ENCODE measurements at regions of chr9 and their contacts with region 1.

Region 1: DNA sequence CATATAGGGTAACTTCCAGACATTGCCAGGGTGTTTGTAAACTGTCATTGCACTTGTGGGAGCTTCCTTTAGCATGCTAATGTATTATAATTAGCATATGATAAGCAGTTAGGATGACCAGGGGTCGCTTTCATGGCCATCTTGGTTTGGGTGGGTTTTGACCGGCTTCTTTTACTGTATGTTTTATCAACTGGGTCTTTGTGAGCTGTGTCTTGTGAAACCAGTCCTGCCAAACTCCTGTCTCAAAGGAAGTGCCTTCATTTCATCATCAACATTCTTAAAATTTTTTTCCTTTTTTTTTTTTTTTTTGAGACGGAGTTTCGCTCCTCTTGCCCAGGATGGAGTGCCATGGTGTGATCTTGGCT is 11.9 kb upstream of the MELK start:
- DNase-seq: no peak
- ATAC-seq: no peak
- H3K4me3 ChIP-seq: no peak overlapping the region
- H3K4me3 Mint-ChIP-seq: no peak overlapping the region
- H3K27ac ChIP-seq: no peak overlapping the region
- H3K27ac Mint-ChIP-seq: no peak overlapping the region
- H3K4me1 ChIP-seq: no peaks in the 10 kb centered on the region
- H3K4me1 Mint-ChIP-seq: no peaks in the 10 kb centered on the region
- H3K27me3 ChIP-seq: no peaks in the 10 kb centered on the region
- H3K27me3 Mint-ChIP-seq: no peaks in the 10 kb centered on the region
- CTCF ChIP-seq: no peak

Region 2: DNA sequence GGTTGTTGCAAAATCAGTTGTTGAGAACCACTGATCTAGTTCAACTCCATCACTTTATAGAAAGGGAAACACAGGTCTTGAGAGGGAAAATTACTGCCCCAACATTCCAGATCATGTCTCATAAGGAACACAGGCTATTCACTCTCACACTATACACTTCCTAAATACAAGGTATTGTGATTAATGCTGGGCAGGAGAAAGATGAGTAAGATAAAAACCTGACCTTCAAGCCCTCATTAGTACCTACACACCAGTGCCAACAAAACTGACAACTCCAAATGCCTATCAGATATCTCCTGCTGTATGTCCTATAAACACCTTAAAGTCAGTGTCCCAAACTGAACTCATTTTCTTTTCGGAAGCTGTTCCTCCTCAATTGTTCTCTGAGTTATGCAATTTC is 310.8 kb before region 1 on chr9:
- CTCF ChIA-PET with region 1: no interaction called
- POLR2A ChIA-PET with region 1: no interaction called
- intact Hi-C with region 1: loop called (anchors 2 kb)
- DNase-seq: no peak
- ATAC-seq: no peak
- H3K4me3 ChIP-seq: no peak overlapping the region
- H3K4me3 Mint-ChIP-seq: no peak overlapping the region
- H3K27ac ChIP-seq: no peak overlapping the region
- H3K27ac Mint-ChIP-seq: no peak overlapping the region
- H3K4me1 ChIP-seq: peaks cover 6 to 9% of the 10 kb centered on the region in 2 donors
- H3K4me1 Mint-ChIP-seq: peaks cover 25% of the 10 kb centered on the region
- H3K27me3 ChIP-seq: no peaks in the 10 kb centered on the region
- H3K27me3 Mint-ChIP-seq: no peaks in the 10 kb centered on the region
- CTCF ChIP-seq: no peak

Region 3: GRCh38 chr9:36400332-36401163 is 160.3 kb before region 1 on chr9:
- CTCF ChIA-PET with region 1: interaction called, 456 read pairs
- POLR2A ChIA-PET with region 1: no interaction called
- intact Hi-C with region 1: no loop called
- DNase-seq: peak; percentile 97
- ATAC-seq: peak; percentile 79
- H3K4me3 ChIP-seq: peak overlapping the region; percentile 72 to 90 (median 81)
- H3K4me3 Mint-ChIP-seq: peak overlapping the region; percentile 88
- H3K27ac ChIP-seq: peak overlapping the region; percentile 94 to 98
- H3K27ac Mint-ChIP-seq: peak overlapping the region; percentile 93
- H3K4me1 ChIP-seq: peaks cover 18 to 21% of the 10 kb centered on the region in 2 donors
- H3K4me1 Mint-ChIP-seq: peaks cover 34% of the 10 kb centered on the region
- H3K27me3 ChIP-seq: no peaks in the 10 kb centered on the region
- H3K27me3 Mint-ChIP-seq: no peaks in the 10 kb centered on the region
- CTCF ChIP-seq: no peak

Region 4: DNA sequence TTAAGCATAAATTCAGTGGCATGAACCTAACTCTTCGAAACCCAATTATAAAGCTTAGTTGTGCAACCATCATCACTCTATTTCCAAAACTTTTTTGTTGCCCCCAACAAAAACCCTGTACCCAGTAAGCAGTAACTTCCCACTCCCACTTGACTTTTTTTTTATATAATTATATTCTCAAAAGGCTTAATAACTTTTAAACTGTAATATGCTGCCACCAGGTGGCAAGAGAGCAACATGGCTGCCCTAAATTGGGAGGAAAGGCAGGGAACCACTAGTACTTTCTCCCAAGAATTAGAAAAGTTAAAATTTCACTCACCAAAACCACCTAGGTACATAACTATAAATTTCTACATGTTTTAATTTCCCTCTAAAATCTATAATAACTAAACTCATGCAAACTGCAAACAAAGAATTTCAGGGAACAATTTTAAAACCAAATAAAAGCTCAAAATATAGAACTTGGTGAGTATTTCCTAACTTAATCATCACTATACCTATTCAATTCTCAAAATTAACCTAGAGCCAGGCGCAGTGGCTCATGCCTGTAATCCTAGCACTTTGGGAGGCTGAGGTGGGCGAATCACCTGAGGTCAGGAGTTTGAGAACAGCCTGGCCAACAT is 110.6 kb before region 1 on chr9:
- CTCF ChIA-PET with region 1: interaction called, 19 read pairs
- POLR2A ChIA-PET with region 1: no interaction called
- intact Hi-C with region 1: loop called (anchors 1 kb)
- DNase-seq: peak; percentile 40
- ATAC-seq: no peak
- H3K4me3 ChIP-seq: no peak overlapping the region
- H3K4me3 Mint-ChIP-seq: no peak overlapping the region
- H3K27ac ChIP-seq: no peak overlapping the region
- H3K27ac Mint-ChIP-seq: no peak overlapping the region
- H3K4me1 ChIP-seq: no peaks in the 10 kb centered on the region
- H3K4me1 Mint-ChIP-seq: peaks cover 8% of the 10 kb centered on the region
- H3K27me3 ChIP-seq: no peaks in the 10 kb centered on the region
- H3K27me3 Mint-ChIP-seq: no peaks in the 10 kb centered on the region
- CTCF ChIP-seq: peak; percentile 75

Region 5: DNA sequence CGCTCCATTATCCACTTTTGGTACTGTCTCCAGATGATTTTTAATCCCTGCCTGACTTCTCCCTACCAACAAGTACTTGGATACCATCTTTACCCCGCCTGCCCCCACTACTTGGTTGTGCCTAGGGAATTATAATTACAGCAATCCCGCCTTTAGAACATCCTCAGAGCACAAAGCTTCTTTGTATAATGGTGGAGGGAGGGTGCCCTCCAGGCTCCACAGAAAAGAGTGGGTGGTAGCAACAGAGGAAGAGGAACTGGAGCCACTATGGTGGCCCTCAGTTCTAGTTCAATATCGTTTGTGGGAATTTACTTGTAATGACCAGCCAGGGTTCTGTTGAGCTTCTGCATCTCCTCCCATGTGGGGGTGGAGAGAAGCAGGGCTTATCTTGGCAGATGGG is 81.7 kb before region 1 on chr9:
- CTCF ChIA-PET with region 1: interaction called, 3 read pairs
- POLR2A ChIA-PET with region 1: interaction called, 12 read pairs
- intact Hi-C with region 1: no loop called
- DNase-seq: no peak
- ATAC-seq: no peak
- H3K4me3 ChIP-seq: no peak overlapping the region
- H3K4me3 Mint-ChIP-seq: no peak overlapping the region
- H3K27ac ChIP-seq: peak overlapping the region in 1 of 2 donors; percentile 2
- H3K27ac Mint-ChIP-seq: no peak overlapping the region
- H3K4me1 ChIP-seq: no peaks in the 10 kb centered on the region
- H3K4me1 Mint-ChIP-seq: peaks cover 28% of the 10 kb centered on the region
- H3K27me3 ChIP-seq: no peaks in the 10 kb centered on the region
- H3K27me3 Mint-ChIP-seq: no peaks in the 10 kb centered on the region
- CTCF ChIP-seq: no peak

Region 6: DNA sequence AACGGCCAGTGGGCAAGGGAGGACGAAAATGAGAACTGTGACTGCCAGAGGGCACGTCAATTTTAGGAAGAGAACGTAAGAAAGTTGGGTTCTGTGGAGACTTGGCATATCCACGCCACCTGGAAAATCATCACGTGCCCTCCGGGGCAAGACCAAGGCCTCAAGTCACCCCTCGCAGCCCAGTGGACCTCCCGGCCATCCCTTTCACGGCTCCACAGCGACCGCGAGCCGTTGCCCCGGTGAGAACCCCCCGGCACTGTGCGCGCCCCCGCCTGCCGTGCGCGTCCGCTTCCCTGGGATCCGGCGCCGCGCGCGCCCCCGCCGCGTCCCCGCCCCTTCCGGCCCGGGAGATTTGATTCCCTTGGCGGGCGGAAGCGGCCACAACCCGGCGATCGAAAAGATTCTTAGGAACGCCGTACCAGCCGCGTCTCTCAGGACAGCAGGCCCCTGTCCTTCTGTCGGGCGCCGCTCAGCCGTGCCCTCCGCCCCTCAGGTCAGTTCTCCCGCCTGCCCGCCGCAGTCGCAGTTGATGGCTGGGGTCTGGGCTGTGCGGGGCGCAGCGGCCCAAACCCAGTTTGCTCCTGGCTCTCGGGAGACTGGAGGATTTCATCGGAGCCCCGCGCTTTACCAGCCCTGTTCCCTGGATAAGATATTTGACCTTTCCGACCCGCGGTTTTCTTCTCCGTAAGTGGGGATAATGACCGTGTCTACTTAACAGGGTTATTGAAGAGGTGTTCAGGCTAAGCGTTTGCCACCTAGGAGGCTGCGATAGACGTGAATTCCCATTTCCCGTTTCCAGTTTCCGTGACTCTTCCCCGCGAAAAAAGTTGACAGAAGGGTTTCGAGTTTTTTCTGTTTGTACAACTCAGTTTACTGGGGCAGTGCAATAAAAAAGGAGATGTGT is 11.9 kb after region 1 on chr9 and contains the start of gene MELK:
- CTCF ChIA-PET with region 1: interaction called, 11 read pairs
- POLR2A ChIA-PET with region 1: no interaction called
- intact Hi-C with region 1: no loop called
- DNase-seq: peak; percentile 86
- ATAC-seq: peak; percentile 90
- H3K4me3 ChIP-seq: peak within 1 kb of the TSS; percentile 67 to 97 (median 81)
- H3K4me3 Mint-ChIP-seq: peak within 1 kb of the TSS; percentile 90
- H3K27ac ChIP-seq: peak within 1 kb of the TSS; percentile 18 to 67
- H3K27ac Mint-ChIP-seq: peak within 1 kb of the TSS; percentile 71
- H3K4me1 ChIP-seq: peaks cover 8 to 16% of the 10 kb centered on the region in 2 donors
- H3K4me1 Mint-ChIP-seq: peaks cover 13% of the 10 kb centered on the region
- H3K27me3 ChIP-seq: peaks cover 0 to 2% (median 0%) of the 10 kb centered on the region in 4 experiments
- H3K27me3 Mint-ChIP-seq: peaks cover 4% of the 10 kb centered on the region
- CTCF ChIP-seq: no peak
- total RNA-seq, gene MELK: 0.17 TPM in 1 of 2 replicates, not detected in the other

Region 7: DNA sequence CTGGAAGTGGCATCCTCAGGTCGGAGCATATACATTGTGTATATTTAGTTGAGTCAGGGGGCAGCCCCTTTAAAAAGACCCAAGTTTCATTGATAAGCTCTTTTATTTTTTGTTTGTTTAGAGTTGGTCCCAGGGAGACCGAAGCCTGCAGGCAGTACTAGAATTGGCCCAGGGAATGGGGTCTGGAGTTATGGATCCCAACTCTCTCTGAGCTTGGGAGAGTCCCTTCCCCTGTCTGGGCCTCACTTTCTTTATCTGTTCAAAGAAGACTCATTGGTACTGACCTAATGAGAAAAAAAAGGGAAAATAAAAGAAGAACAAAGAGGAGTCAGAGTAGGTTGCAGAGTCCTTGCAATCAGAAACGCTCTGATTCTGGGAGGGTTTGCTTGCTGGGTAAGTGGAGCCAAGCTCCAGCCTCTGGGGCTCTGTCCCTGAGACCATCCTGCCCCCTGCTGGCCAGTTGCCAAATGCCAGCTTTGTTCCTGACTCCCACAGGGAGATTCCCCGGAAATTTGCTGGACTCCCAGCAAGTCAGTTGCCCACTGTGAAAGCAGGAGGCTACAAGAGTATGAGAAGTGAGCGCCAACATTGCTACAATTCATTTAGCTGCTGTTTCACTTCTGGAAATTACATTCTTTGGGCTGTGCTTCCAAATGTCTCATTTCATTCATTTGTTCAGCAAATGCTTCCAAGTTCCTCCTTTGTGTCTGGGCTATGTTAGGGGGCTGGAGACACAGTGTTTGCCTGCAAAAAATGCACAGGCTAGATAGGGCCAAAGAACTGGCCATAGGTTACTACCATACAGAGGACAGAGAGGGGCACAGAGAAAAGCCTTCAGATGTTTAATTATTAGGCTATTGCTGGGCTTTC is 168.0 kb after region 1 on chr9:
- CTCF ChIA-PET with region 1: interaction called, 5 read pairs
- POLR2A ChIA-PET with region 1: no interaction called
- intact Hi-C with region 1: loop called (anchors 5 kb)
- DNase-seq: peak; percentile 68
- ATAC-seq: peak; percentile 78
- H3K4me3 ChIP-seq: no peak overlapping the region
- H3K4me3 Mint-ChIP-seq: no peak overlapping the region
- H3K27ac ChIP-seq: no peak overlapping the region
- H3K27ac Mint-ChIP-seq: no peak overlapping the region
- H3K4me1 ChIP-seq: peaks cover 9 to 10% of the 10 kb centered on the region in 2 donors
- H3K4me1 Mint-ChIP-seq: peaks cover 10% of the 10 kb centered on the region
- H3K27me3 ChIP-seq: no peaks in the 10 kb centered on the region
- H3K27me3 Mint-ChIP-seq: no peaks in the 10 kb centered on the region
- CTCF ChIP-seq: peak; percentile 91